ENCODE measurements at regions of chr3 and their contacts with region 1.

Region 1: DNA sequence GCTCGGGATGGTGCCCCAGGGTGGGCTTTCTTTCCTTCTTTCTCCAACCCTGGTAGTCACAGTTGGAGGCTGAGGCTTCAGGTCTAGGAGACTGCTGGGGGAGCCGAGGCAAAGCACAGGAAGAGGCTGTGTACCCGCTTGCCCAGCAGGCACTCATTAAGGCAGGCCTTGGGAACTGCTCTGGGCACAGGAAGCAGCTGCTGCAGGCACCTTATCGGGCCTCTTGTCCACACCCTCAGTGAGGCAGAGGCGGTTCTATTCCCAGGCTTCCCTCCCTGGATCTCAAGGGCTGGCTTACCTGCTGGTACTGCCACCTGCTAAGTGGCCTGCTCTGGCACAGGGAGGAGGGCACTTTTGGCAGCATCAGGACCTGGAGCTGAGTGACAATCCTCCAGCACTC is 15.8 kb upstream of the GRM2 start:
- DNase-seq: no peak
- ATAC-seq: no peak
- H3K4me3 ChIP-seq: no peak overlapping the region
- H3K4me3 Mint-ChIP-seq: no peak overlapping the region
- H3K27ac ChIP-seq: no peak overlapping the region
- H3K27ac Mint-ChIP-seq: peak overlapping the region in 1 of 2 donors; percentile 39
- H3K4me1 ChIP-seq: peaks cover 18 to 91% of the 10 kb centered on the region in 2 experiments
- H3K4me1 Mint-ChIP-seq: peaks cover 50 to 65% (median 52%) of the 10 kb centered on the region in 3 donors
- H3K27me3 ChIP-seq: no peaks in the 10 kb centered on the region
- H3K27me3 Mint-ChIP-seq: no peaks in the 10 kb centered on the region

Region 2: GRCh38 chr3:51445544-51446280 is 245.3 kb before region 1 on chr3:
- CTCF ChIA-PET with region 1: interaction called in 1 of 2 experiments, 11 read pairs
- POLR2A ChIA-PET with region 1: no interaction called
- DNase-seq: no peak
- ATAC-seq: no peak
- H3K4me3 ChIP-seq: no peak overlapping the region
- H3K4me3 Mint-ChIP-seq: no peak overlapping the region
- H3K27ac ChIP-seq: no peak overlapping the region
- H3K27ac Mint-ChIP-seq: no peak overlapping the region
- H3K4me1 ChIP-seq: peaks cover 0 to 9% of the 10 kb centered on the region in 2 experiments
- H3K4me1 Mint-ChIP-seq: peaks cover 34 to 49% (median 41%) of the 10 kb centered on the region in 3 donors
- H3K27me3 ChIP-seq: no peaks in the 10 kb centered on the region
- H3K27me3 Mint-ChIP-seq: no peaks in the 10 kb centered on the region

Measured in T-cell (primary cell).